ENCODE measurements at regions of chr6 and their contacts with region 1.

Region 1: GRCh38 chr6:105077596-105078385 is 102.0 kb downstream of the POPDC3 start:
- ATAC-seq: peak in 4 of 8 experiments; percentile 51 to 65 (median 56)
- H3K4me3 ChIP-seq: no peak overlapping the region
- H3K27ac ChIP-seq: no peak overlapping the region
- H3K4me1 ChIP-seq: peaks cover 0 to 5% of the 10 kb centered on the region in 2 donors

Region 2: DNA sequence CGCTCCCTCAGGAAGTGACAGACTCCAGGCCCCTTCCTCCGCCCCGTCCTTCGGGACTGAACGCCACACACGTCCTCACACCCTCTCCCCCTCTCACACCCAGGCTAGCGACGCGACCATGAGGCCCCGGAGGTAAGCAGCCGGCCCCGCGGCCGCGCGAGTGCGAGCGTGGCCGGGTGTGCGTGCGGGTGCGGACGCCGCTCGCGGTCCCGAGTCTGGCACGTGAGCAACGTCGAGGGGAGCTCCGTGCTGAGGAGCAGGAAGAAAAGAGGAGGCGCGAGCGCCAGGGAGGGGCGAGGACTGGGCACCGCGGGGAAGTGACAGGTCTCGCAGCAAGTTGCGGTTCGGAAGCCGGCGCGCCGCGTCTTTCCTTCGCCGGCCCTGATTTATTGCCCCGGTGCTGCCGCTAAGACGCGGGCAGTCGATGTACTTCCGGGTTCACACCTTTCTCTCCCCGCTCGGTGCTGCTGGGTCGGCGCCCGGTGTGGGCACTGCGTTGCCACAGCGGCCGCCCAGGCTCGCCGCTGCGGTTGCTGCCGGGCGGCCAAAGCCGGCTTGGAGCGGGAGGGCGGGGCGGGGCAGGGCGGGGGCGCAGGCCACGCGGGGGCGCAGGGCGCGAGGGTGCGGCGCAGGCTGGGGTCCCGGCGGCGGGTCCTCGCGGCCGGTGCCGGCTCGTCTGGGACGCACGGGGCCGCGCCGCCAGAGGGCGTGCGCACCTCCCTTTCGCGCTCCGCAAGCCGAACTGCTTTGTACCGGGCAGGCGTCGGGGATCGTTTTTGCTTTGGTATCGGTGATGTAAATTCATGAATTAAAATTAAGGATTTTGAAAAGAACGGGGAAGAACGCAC is 136.7 kb before region 1 on chr6:
- in situ Hi-C with region 1: loop called in 1 of 9 experiments (anchors 25 kb)
- ATAC-seq: peak; percentile 81 to 97 (median 86)
- H3K4me3 ChIP-seq: peak overlapping the region; percentile 38 to 90 (median 57)
- H3K27ac ChIP-seq: peak overlapping the region; percentile 74 to 88
- H3K4me1 ChIP-seq: peaks cover 0 to 3% of the 10 kb centered on the region in 2 donors

Region 3: DNA sequence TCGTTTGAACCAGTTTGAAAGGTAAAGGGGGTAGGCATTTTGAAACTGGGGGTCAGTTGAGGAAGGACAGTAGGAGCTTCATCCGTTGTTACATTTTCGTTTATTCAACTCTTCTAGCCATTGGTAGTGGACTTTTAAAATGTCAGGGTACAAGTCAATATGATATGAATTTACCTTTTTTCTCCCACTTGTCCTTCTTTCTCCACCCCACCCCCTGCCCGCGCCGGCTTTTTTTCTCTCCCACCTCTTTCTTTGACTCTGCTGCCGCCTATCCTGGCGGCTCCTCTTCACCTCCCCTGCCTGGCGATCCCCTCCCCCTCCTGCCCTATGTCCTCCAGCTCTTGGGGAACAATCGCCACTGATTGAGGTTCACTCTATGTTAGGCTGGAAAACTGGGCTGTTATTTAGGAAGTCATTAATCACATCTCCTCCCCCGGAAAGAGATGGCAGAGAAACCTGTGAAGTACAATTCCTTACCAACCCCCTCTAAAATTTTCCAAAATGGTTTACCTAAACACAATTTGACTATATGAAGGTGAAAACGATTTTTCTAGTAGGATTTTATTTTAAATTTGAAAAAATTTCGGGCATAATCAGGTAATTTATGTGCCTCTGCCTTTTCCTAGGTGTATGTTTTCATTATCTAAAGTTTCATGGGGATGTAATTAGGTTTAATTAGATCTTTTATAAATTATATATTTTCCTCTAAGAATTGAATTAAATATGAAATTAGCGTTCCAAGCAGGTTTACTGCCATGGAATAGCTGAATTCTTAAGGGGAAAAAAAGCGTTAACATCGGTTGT is 121.7 kb before region 1 on chr6:
- in situ Hi-C with region 1: loop called in 1 of 9 experiments (anchors 25 kb)
- ATAC-seq: peak in 5 of 8 experiments; percentile 21 to 59 (median 53)
- H3K4me3 ChIP-seq: peak overlapping the region; percentile 37 to 50 (median 45)
- H3K27ac ChIP-seq: peak overlapping the region; percentile 55 to 73
- H3K4me1 ChIP-seq: peaks cover 3 to 12% of the 10 kb centered on the region in 2 donors

Region 4: DNA sequence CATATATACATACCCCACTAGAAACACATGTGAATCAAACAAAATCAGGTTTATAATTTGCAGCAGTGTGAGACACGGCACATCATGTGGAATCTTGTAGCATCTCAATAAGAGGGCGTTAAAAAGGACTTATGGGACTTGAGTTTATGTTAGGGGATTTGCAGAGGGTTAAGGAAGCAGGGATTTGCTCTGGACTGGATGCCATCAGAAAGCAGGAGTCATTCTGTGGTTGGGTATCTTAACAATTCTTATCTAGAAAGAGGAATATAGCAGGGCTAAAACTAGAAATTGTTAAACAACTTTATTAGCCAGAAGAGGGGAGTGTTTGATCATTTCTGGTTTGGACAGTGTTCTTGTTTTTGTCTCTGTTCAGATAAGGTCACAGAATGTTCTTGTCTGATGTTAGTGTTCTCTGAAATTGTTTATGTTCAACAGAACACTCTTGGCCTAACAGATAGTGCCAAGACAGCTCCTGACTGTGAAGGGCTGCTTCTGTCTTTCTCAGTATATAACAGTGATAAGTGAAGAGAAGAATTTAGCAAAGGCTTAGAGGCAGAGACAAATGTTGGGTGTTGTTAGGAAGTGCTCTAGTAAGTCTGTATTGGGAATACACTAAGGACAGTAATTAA is 81.7 kb before region 1 on chr6:
- in situ Hi-C with region 1: loop called in 1 of 9 experiments (anchors 10 kb)
- ATAC-seq: peak in 3 of 8 experiments; percentile 28 to 57 (median 52)
- H3K4me3 ChIP-seq: no peak overlapping the region
- H3K27ac ChIP-seq: no peak overlapping the region
- H3K4me1 ChIP-seq: peaks cover 0 to 6% of the 10 kb centered on the region in 2 donors

Region 5: GRCh38 chr6:105259913-105260889 is 182.4 kb after region 1 on chr6:
- in situ Hi-C with region 1: no loop called
- ATAC-seq: no peak
- H3K4me3 ChIP-seq: no peak overlapping the region
- H3K27ac ChIP-seq: no peak overlapping the region
- H3K4me1 ChIP-seq: peaks cover 14 to 22% of the 10 kb centered on the region in 2 donors